GM12878 (cell line): ENCODE measurements at regions of chr18 and their contacts with region 1.

Region 1: GRCh38 chr18:50315100-50315871 is 27.8 kb upstream of the CXXC1 start:
- DNase-seq: peak; percentile 97
- ATAC-seq: peak; percentile 89
- H3K4me3 ChIP-seq: peak overlapping the region; percentile 22
- H3K27ac ChIP-seq: peak overlapping the region; percentile 95
- H3K4me1 ChIP-seq: peaks cover 72% of the 10 kb centered on the region
- H3K27me3 ChIP-seq: no peaks in the 10 kb centered on the region
- CTCF ChIP-seq: no peak
- EP300 ChIP-seq: peak in 1 of 2 experiments; percentile 73; a peak in 2 of 4 replicates
- POLR2A ChIP-seq: no peak
- RAD21 ChIP-seq: 0 out of 2 replicates have a peak, but pooled peaks have one; percentile 20

Region 2: DNA sequence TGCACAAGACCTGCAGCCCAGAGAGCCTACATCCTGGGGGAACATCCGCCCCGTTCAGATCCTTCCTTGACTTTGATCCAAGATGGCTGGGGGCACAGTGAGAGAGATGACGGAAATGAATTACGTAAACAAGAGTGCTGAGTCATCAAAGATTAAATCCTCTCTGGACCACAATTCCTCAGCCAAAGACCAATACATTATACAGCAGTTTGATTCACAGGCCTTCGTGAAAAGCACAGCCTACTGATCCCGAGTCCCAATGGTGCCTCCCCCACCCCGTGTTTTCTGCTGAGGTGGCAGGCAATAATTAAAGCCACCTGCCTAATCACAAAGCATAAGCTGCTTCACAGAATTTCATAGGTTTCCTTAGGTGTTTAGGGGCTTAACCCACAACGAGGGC is 163.4 kb before region 1 on chr18:
- CTCF ChIA-PET with region 1: no interaction called
- POLR2A ChIA-PET with region 1: no interaction called
- RAD21 ChIA-PET with region 1: no interaction called
- SMC1A ChIA-PET with region 1: no interaction called
- in situ Hi-C with region 1: no loop called
- intact Hi-C with region 1: no loop called
- DNase-seq: no peak
- ATAC-seq: no peak
- H3K4me3 ChIP-seq: no peak overlapping the region
- H3K27ac ChIP-seq: no peak overlapping the region
- H3K4me1 ChIP-seq: no peaks in the 10 kb centered on the region
- H3K27me3 ChIP-seq: no peaks in the 10 kb centered on the region; a peak in 1 of 4 replicates
- CTCF ChIP-seq: no peak
- EP300 ChIP-seq: no peak
- POLR2A ChIP-seq: no peak
- RAD21 ChIP-seq: no peak

Region 3: DNA sequence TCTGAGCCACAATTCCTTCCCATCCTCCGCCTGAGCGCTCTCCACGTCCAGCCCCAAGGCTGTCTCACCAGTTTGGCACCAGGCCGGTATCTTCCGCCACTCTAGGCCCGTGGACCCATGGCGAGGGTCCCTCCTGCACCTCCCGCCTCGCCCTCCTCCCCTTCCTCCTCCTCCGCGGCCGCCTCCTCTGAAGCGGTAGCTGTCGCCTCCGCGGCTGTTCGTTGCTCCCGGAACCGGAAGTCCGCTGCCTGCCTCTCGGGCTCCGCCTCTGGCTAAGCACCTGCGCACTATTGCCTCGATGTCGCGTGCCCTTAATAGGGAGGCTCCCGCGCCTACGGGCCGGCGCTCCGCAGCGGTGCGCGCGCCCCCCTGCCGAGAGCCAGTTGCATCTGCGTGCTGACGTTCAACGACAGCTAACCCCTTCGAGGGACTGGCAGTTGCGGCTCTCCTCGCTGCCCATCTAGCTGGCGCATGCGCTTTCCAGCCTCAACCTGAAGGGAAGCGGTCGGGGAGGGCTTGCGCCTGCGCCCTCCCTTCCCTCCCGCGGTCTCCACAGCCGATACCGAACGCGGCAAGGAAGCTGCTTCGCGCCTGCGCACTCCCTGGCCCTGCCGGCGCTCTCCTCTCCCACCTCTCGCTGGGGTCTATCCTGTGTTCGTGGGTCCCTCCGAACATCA is 33.9 kb before region 1 on chr18 and contains the start of gene MBD1:
- CTCF ChIA-PET with region 1: interaction called, 10 read pairs
- POLR2A ChIA-PET with region 1: interaction called, 15 read pairs
- RAD21 ChIA-PET with region 1: interaction called, 6 read pairs
- SMC1A ChIA-PET with region 1: interaction called, 5 read pairs
- in situ Hi-C with region 1: no loop called
- intact Hi-C with region 1: loop called (anchors 1 kb)
- DNase-seq: peak; percentile 96
- ATAC-seq: peak; percentile 96
- H3K4me3 ChIP-seq: peak within 1 kb of the TSS; percentile 99
- H3K27ac ChIP-seq: peak within 1 kb of the TSS; percentile 88
- H3K4me1 ChIP-seq: peaks cover 16% of the 10 kb centered on the region
- H3K27me3 ChIP-seq: no peaks in the 10 kb centered on the region
- CTCF ChIP-seq: peak in 2 of 3 experiments; percentile 17 to 26; a peak in 1 of 6 replicates
- EP300 ChIP-seq: no peak
- POLR2A ChIP-seq: no peak
- RAD21 ChIP-seq: no peak
- polyA plus RNA-seq, gene MBD1: 8.4 to 12.4 TPM

Region 4: GRCh38 chr18:50334546-50335152 is 19.4 kb after region 1 on chr18:
- CTCF ChIA-PET with region 1: interaction called, 13 read pairs
- POLR2A ChIA-PET with region 1: interaction called, 5 read pairs
- RAD21 ChIA-PET with region 1: interaction called, 20 read pairs
- SMC1A ChIA-PET with region 1: interaction called, 25 read pairs
- in situ Hi-C with region 1: no loop called
- intact Hi-C with region 1: no loop called
- DNase-seq: peak; percentile 71
- ATAC-seq: peak; percentile 78
- H3K4me3 ChIP-seq: peak overlapping the region; percentile 2; the same call in 1 of the 2 replicates
- H3K27ac ChIP-seq: peak overlapping the region; percentile 31
- H3K4me1 ChIP-seq: peaks cover 49% of the 10 kb centered on the region
- H3K27me3 ChIP-seq: no peaks in the 10 kb centered on the region
- CTCF ChIP-seq: no peak
- EP300 ChIP-seq: peak; percentile 43 to 66; a peak in 3 of 4 replicates
- POLR2A ChIP-seq: no peak
- RAD21 ChIP-seq: no peak

Region 5: DNA sequence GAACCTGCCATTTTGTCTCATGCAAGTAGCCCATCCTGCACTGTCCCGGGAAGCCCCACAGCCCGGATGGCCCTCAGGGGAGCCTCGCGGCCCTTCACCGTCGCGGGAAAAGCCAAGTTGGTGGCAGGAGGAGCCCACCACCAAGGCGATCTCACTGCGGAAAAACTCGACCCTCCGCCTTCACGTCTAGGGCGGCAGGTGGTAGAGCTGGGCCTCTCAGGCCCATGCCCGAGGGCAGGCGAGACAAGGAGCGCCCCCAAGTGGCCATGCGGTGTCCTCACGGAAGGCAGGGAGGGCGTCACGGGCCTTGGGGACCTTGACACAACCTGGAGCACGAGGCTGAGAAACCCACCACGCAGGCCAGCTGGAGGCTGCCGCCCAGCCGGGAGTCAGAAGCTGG is 24.8 kb after region 1 on chr18:
- CTCF ChIA-PET with region 1: interaction called, 6 read pairs
- POLR2A ChIA-PET with region 1: interaction called, 4 read pairs
- RAD21 ChIA-PET with region 1: interaction called, 20 read pairs
- SMC1A ChIA-PET with region 1: interaction called, 25 read pairs
- in situ Hi-C with region 1: no loop called
- intact Hi-C with region 1: no loop called
- DNase-seq: no peak
- ATAC-seq: no peak
- H3K4me3 ChIP-seq: no peak overlapping the region
- H3K27ac ChIP-seq: no peak overlapping the region
- H3K4me1 ChIP-seq: peaks cover 22% of the 10 kb centered on the region
- H3K27me3 ChIP-seq: no peaks in the 10 kb centered on the region
- CTCF ChIP-seq: peak in 2 of 3 experiments; percentile 21 to 28; a peak in 2 of 6 replicates
- EP300 ChIP-seq: no peak
- POLR2A ChIP-seq: no peak
- RAD21 ChIP-seq: no peak

Region 6: GRCh38 chr18:50454387-50454988 is 139.2 kb after region 1 on chr18:
- CTCF ChIA-PET with region 1: no interaction called
- POLR2A ChIA-PET with region 1: no interaction called
- RAD21 ChIA-PET with region 1: no interaction called
- SMC1A ChIA-PET with region 1: no interaction called
- in situ Hi-C with region 1: no loop called
- intact Hi-C with region 1: no loop called
- DNase-seq: no peak
- ATAC-seq: no peak
- H3K4me3 ChIP-seq: no peak overlapping the region
- H3K27ac ChIP-seq: no peak overlapping the region
- H3K4me1 ChIP-seq: no peaks in the 10 kb centered on the region
- H3K27me3 ChIP-seq: no peaks in the 10 kb centered on the region; a peak in 1 of 4 replicates
- CTCF ChIP-seq: no peak
- EP300 ChIP-seq: no peak
- POLR2A ChIP-seq: no peak
- RAD21 ChIP-seq: no peak